HAP-1 (cell line): ENCODE measurements at regions of chr17 and their contacts with region 1.

Region 1: DNA sequence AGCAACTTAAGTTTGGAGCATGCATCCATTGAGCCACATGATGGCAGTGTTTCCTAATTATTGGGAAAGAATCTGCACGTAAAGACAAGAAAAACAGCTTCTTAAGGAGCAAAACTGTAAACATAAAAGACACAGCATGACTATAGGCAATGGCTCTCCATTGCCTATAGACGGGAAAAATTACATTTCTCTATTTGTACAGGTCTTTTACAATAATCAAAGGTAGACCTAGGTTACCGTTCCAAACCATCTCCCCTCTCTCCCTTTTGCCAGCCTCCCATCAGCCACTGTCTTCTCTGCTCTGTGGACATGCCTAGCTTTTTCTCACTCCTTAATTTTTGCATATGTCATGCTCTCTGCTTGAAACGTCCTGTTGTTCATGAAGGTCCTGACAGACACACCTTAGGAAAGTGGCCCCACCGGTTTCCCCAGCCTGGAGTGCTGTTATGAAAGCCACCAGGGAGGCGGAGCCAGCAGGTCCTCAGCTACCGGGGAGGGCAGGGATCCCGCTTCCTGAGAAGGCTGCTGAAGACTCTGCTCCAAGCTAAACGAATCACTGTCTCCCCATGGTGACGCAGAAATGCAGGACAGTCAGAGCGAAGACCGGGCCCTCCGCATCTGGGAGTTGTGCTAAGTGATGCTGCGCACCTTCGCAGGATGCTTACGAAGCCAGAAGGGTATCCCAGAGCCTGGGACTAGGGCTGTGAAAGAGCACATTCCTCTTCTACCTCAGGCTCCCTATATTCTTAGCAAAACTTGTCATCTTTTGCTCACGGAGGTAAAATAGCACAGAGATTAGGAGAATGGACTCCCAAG is 2.2 kb upstream of the SLC16A11 start:
- DNase-seq: peak; percentile 52 to 69
- H3K4me3 ChIP-seq: no peak overlapping the region
- H3K4me1 ChIP-seq: peaks cover 4% of the 10 kb centered on the region
- H3K27me3 ChIP-seq: no peaks in the 10 kb centered on the region

Region 2: GRCh38 chr17:7186241-7186640 is 140.1 kb after region 1 on chr17:
- in situ Hi-C with region 1: loop called (anchors 10 kb)
- DNase-seq: peak in 1 of 2 experiments; percentile 38
- H3K4me3 ChIP-seq: no peak overlapping the region
- H3K4me1 ChIP-seq: no peaks in the 10 kb centered on the region
- H3K27me3 ChIP-seq: no peaks in the 10 kb centered on the region